AG04450 (cell line): ENCODE measurements at regions of chr11 and their contacts with region 1.

Region 1: DNA sequence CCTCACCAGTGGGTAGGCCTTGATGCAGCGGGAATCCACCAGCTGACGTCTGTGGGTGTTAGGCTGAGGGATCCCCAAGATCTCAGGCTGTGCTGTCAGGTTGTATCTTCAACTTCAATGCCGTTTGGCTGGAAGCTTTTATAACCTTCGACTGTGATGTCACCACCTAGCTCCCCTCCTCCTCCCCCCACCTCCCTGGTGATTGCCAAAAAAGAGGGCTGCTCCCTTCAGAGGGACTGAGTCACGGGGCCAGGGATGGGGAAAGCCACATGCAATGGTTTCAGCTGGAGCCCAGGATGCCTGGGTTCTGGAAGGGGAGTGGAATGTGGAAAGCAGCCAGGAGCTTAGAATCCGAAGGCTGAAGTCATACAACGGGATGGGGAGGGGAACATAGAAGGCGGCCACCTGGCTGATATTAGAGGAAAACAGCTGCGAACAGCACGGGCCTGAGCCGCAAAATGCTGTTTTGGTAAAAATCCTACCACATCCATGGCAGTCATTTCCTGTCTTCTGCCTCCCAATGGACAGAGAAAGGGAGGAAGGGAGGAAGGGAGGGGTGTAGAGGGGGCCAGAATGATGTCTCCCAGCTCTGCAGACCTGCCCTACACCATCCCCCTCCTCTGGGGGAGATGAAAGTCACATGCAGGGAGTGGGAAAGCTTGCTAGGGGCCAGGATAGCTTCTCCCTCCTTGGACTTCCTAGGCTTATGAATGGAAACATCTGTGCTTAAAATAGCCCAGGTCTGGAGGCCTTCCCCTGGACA is at the start of gene LRRN4CL:
- DNase-seq: peak; percentile 85
- H3K4me3 ChIP-seq: peak within 1 kb of the TSS; percentile 48
- H3K27ac ChIP-seq: peak within 1 kb of the TSS; percentile 92
- H3K27me3 ChIP-seq: no peaks in the 10 kb centered on the region
- CTCF ChIP-seq: no peak
- polyA plus RNA-seq, gene LRRN4CL: 4.1 and 5.7 TPM in 2 replicates

Region 2: DNA sequence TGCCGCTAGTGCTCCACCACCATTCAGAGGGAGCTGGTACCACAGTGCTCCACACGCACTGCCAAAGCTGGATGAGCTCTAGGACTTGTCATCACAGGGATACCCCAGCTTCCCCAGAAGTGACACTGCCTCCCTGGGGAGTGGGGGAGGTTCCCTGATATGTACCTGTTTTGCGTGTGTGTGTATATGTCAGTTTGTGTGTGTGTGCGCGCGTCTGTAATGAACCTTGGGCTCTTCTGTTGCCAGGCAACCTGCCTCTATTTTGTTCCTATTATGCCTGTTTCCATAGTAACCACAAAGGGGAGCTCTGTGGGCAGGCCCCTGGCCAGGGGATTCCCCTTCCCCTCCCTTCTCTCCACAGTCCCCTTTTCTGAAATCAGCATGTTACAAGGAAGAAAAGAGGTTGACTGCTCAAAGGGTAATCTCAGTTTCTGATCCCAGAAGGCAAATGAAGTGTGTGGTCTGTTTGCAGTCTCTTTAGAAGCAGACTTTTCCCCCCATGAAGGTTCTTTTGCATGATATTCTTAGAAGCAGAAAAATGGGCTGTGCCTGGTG is 137.8 kb before region 1 on chr11:
- CTCF ChIA-PET with region 1: no interaction called
- POLR2A ChIA-PET with region 1: no interaction called
- DNase-seq: no peak
- H3K4me3 ChIP-seq: no peak overlapping the region
- H3K27ac ChIP-seq: peak overlapping the region; percentile 80
- H3K27me3 ChIP-seq: no peaks in the 10 kb centered on the region
- CTCF ChIP-seq: no peak

Region 3: GRCh38 chr11:62671575-62672389 is 17.8 kb before region 1 on chr11 and contains the starts of genes LBHD1 and UQCC3:
- CTCF ChIA-PET with region 1: interaction called, 5 read pairs
- POLR2A ChIA-PET with region 1: interaction called, 15 read pairs
- DNase-seq: peak; percentile 65
- H3K4me3 ChIP-seq: peak within 1 kb of the TSS; percentile 84
- H3K27ac ChIP-seq: peak within 1 kb of the TSS; percentile 81
- H3K27me3 ChIP-seq: no peaks in the 10 kb centered on the region
- CTCF ChIP-seq: no peak
- polyA plus RNA-seq, gene LBHD1: 2.4 and 3.2 TPM in 2 replicates
- polyA plus RNA-seq, gene UQCC3: 5.4 and 6.2 TPM in 2 replicates

Region 4: GRCh38 chr11:62678770-62679696 is 10.6 kb before region 1 on chr11 and contains the start of gene UBXN1:
- CTCF ChIA-PET with region 1: interaction called, 36 read pairs
- POLR2A ChIA-PET with region 1: interaction called, 18 read pairs
- DNase-seq: peak; percentile 66
- H3K4me3 ChIP-seq: peak within 1 kb of the TSS; percentile 98
- H3K27ac ChIP-seq: peak within 1 kb of the TSS; percentile 80
- H3K27me3 ChIP-seq: no peaks in the 10 kb centered on the region
- CTCF ChIP-seq: no peak
- polyA plus RNA-seq, gene UBXN1: 92.8 and 100 TPM in 2 replicates

Region 5: DNA sequence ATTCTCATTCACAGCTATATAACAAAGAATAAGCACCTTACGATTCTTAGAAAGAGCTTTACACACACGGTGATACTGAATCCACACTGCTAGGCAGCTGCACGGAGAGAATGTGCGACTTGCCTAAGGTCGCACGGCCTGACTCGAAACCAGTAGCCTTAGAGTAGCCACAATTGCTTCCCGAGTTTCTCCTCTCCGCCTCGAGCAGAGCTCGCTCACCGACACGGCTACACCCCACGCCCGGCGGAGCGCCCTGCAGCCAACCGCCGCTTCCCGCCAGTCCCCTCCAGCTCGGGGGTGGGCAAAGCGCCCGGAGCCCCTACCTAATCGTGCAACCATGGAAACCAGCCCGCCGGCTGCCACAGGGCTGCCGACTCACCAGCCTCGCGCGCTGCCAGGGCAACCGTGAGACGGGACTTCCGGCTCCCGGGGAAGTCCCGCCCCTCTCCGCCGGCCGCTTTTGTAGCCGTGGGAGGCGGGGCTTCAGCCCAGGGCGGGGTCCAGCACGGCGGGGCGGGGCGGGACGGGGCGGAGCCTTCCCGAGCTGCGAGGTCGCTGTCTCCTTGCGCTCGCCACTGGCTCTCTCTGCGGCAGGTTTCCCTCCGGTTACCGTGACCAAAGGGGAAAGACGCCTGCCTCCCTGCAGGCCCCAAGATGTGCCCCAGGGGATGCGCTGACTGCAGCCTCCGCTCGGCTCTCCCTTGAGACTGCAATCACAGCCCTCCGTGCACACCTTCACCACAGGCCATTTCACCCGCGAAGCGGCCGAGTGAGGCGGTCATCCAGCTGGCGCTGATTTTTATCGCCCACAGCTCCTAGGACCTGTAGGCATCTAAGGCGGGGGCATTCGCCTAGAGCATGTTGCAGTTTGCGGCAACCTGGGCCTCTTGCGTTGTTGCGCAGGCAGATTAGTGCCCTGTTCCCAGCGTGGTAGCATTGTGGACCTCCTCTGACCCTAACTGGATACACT is 16.6 kb after region 1 on chr11:
- CTCF ChIA-PET with region 1: interaction called, 22 read pairs
- POLR2A ChIA-PET with region 1: interaction called, 17 read pairs
- DNase-seq: peak; percentile 79
- H3K4me3 ChIP-seq: peak overlapping the region; percentile 76
- H3K27ac ChIP-seq: peak overlapping the region; percentile 86
- H3K27me3 ChIP-seq: no peaks in the 10 kb centered on the region
- CTCF ChIP-seq: no peak